Esophagus squamous epithelium (tissue), 5 donors: ENCODE measurements at regions of chr9 and their contacts with region 1.

Region 1: DNA sequence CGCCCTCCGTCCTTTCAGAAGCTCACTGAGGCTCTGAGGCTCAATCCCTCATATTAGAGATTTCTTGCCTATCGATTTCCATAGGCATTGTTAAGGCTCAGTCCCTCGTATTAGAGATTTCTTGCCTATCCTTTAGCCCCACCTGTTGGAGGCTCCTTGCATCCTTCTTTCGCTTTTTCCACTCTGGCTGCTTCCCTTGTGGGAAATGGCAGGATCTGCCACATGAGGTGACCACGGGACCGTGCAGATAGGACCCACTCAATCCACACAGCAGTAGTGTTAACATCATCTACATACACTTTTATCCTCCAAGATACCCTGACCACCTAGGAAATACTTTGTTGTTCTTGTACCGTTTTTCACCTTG is 19.5 kb downstream of the IFT74 start:
- DNase-seq: no peak
- H3K4me3 ChIP-seq: no peak overlapping the region
- H3K27ac ChIP-seq: no peak overlapping the region
- H3K4me1 ChIP-seq: peaks cover 0 to 8% (median 0%) of the 10 kb centered on the region in 3 donors
- H3K27me3 ChIP-seq: no peaks in the 10 kb centered on the region
- CTCF ChIP-seq: peak in 4 of 6 experiments; percentile 13 to 45 (median 34)
- POLR2A ChIP-seq: no peak

Region 2: DNA sequence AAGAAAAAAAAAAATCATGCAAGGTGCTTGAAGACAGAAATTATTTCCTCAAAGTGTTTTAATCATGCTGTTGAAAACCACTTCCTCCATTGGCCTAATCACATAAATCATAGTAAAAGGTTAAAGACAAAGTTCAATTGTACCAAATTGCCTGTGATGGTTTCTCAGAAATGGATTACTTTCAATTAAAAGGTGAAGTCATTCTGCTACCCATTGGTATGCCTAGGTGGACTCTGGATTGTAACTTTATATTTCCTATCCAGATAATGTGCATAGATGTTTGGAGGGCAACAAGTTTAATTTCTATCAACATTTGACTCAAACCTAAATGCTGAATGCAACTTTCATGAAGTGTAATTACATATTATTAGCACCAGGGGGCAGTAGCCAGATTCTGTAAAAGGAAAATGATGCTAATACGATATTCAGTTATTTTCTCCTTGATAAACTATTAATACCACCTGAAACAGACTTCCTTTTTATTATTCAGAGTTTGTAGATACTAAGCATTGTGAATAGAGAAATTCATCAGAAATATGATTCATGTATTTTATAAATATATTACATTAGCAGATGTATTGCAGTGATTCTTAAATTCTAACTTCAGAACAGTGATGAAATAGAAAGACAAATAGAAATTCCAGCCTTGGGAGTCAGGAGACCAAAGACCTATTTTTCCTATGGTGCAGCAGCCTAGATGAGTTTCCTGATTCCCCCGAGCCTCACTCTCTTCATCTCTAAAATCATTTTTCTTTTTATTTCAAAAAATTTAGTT is 231.3 kb before region 1 on chr9:
- intact Hi-C with region 1: loop called (anchors 10 kb)
- DNase-seq: no peak
- H3K4me3 ChIP-seq: no peak overlapping the region
- H3K27ac ChIP-seq: no peak overlapping the region
- H3K4me1 ChIP-seq: no peaks in the 10 kb centered on the region
- H3K27me3 ChIP-seq: no peaks in the 10 kb centered on the region
- CTCF ChIP-seq: peak in 5 of 6 experiments; percentile 53 to 78 (median 67)
- POLR2A ChIP-seq: no peak

Region 3: DNA sequence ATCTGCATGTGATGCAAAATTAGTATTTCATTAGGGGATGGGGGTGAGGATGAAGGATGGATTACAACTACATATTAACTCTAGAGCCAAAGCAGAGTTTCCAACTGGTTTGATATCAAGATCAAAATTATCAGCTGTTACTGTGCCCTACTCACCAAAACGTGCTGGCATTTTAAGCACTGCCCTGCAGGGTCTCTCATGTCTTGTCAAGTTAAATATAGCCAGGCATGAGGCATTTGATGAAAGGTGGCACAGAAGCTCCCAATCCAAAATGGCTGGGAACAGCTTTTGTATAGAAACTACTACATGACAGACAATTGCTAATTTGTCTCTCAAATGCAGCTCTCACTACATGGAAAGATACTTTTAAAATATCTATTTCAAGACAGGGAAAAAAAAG is 56.0 kb before region 1 on chr9:
- intact Hi-C with region 1: no loop called
- DNase-seq: no peak
- H3K4me3 ChIP-seq: no peak overlapping the region
- H3K27ac ChIP-seq: no peak overlapping the region
- H3K4me1 ChIP-seq: no peaks in the 10 kb centered on the region
- H3K27me3 ChIP-seq: no peaks in the 10 kb centered on the region
- CTCF ChIP-seq: no peak
- POLR2A ChIP-seq: no peak

Region 4: DNA sequence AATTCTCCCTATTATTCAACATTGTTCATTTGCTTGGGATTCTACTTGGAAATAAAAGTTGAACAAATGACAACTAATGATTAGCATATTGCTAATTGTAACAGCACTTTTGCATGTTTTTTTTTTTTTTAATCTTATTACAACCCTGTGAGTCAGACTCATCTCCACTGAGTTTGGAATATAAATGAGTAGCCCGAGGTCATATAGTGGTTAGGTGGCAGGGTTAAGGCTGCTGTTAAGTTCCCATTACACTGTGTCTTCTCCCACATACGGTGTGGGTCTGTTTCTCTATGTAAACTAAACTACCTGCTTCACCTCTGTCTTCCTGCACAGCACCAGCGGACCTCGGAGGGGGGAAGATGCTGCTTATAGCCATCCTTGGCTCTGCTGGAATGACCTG is 228.9 kb after region 1 on chr9:
- intact Hi-C with region 1: no loop called
- DNase-seq: no peak
- H3K4me3 ChIP-seq: no peak overlapping the region
- H3K27ac ChIP-seq: no peak overlapping the region
- H3K4me1 ChIP-seq: no peaks in the 10 kb centered on the region
- H3K27me3 ChIP-seq: no peaks in the 10 kb centered on the region
- CTCF ChIP-seq: no peak
- POLR2A ChIP-seq: no peak

Region 5: DNA sequence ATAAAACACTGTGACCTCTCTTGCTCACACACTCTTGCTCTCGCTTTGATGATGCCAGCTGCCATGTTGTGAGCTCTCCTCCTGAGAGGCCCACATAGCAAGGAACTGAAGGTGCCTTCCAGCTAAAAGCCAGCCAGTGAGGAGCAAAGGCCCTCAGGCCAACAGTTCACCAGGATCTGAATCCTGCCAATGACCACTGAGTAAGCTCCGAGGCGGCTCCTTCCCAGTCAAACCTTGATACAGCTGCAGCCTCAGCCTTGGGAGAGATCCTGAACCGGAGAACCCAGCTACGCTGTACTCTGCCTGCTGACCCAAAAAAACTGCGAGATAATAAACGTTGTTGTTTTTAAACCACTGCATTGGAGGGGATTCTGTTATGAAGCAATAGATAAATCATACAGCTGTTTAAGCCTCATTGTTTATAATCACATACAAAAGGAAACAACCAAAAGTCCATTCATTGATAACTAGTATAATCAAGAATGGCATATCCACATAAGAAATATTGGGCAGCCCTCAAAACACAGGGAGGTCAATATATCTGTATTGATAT is 499.4 kb after region 1 on chr9:
- intact Hi-C with region 1: no loop called
- DNase-seq: no peak
- H3K4me3 ChIP-seq: no peak overlapping the region
- H3K27ac ChIP-seq: peak overlapping the region in 3 of 4 donors; percentile 18 to 61 (median 38)
- H3K4me1 ChIP-seq: peaks cover 4 to 45% (median 8%) of the 10 kb centered on the region in 3 donors
- H3K27me3 ChIP-seq: no peaks in the 10 kb centered on the region
- CTCF ChIP-seq: no peak
- POLR2A ChIP-seq: no peak